H1 (cell line): ENCODE measurements at regions of chr10 and their contacts with region 1.

Region 1: GRCh38 chr10:71912431-71912830 is 51.8 kb upstream of the CHST3 start:
- DNase-seq: no peak
- H3K4me3 ChIP-seq: no peak overlapping the region
- H3K27ac ChIP-seq: no peak overlapping the region
- H3K4me1 ChIP-seq: no peaks in the 10 kb centered on the region
- H3K27me3 ChIP-seq: no peaks in the 10 kb centered on the region
- CTCF ChIP-seq: peak; percentile 14 to 46 (median 15); a peak in 3 of 4 replicates
- EP300 ChIP-seq: no peak
- POLR2A ChIP-seq: no peak
- RAD21 ChIP-seq: no peak

Region 2: DNA sequence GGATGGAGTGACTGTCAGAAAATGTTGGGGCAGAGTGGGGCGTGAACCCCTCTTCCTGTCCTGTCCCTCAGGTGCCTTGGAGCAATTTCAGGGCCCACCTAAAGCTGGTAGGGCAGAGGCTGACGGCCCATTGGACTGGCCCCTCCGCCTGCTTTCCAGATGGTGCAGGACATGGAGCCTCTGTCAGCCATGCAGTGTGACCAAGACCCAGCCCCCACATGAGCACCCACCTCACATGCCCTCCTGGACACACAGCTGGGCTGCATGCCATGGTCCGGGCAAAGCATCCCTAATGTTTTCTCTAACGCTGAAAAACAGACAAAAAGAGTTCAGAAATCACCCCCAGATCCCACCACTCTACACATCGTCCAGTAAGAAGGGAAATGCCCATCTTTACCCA is 10.1 kb before region 1 on chr10:
- CTCF ChIA-PET with region 1: interaction called, 13 read pairs
- POLR2A ChIA-PET with region 1: no interaction called
- DNase-seq: no peak
- H3K4me3 ChIP-seq: no peak overlapping the region
- H3K27ac ChIP-seq: no peak overlapping the region
- H3K4me1 ChIP-seq: no peaks in the 10 kb centered on the region
- H3K27me3 ChIP-seq: no peaks in the 10 kb centered on the region
- CTCF ChIP-seq: no peak
- EP300 ChIP-seq: no peak
- POLR2A ChIP-seq: no peak
- RAD21 ChIP-seq: no peak

Region 3: GRCh38 chr10:71974489-71975021 is 62.1 kb after region 1 on chr10:
- CTCF ChIA-PET with region 1: no interaction called
- POLR2A ChIA-PET with region 1: no interaction called
- DNase-seq: no peak
- H3K4me3 ChIP-seq: no peak overlapping the region
- H3K27ac ChIP-seq: no peak overlapping the region
- H3K4me1 ChIP-seq: peaks cover 0 to 15% (median 4%) of the 10 kb centered on the region in 4 experiments; a peak in 4 of 7 replicates
- H3K27me3 ChIP-seq: no peaks in the 10 kb centered on the region
- CTCF ChIP-seq: no peak
- EP300 ChIP-seq: no peak
- POLR2A ChIP-seq: no peak
- RAD21 ChIP-seq: no peak